ENCODE measurements at regions of chr3 and their contacts with region 1.

Region 1: DNA sequence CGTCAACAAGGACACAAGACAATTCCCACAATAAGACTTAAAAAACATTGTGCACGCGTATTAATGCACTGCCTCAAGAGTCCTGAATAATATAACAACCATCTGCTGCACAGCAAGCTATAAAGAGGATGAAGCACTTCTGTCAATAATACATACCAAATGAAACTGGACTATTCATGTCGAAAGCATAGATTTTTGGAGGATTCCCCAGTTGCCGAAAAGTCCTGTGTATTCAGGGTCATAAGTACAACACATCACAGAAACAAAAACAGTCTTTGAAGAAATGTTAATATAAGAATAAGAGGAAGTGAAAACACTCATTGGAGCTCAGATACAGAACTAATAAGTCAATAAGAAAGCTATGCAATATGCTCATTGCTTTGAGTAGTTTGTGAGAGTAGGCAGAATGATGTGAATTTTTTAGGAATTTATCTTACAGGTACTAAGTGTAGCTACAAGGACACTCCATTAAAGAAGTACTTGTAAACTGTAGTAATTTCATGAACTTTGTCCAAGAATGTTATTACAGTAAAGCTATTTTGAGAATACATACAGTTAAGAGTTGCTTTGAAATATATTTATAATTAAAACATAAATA is 31.6 kb downstream of the CBLB start:
- DNase-seq: no peak
- ATAC-seq: peak in 1 of 2 donors; percentile 28
- H3K4me3 Mint-ChIP-seq: peak overlapping the region in 7 of 10 donors; percentile 11 to 75 (median 30)
- H3K27ac Mint-ChIP-seq: peak overlapping the region in 7 of 10 donors; percentile 0 to 75 (median 65)
- H3K4me1 Mint-ChIP-seq: peaks cover 25 to 77% (median 68%) of the 10 kb centered on the region in 4 donors
- H3K27me3 Mint-ChIP-seq: no peaks in the 10 kb centered on the region

Region 2: GRCh38 chr3:105613120-105613519 is 224.1 kb before region 1 on chr3:
- POLR2A ChIA-PET with region 1: no interaction called
- DNase-seq: no peak
- ATAC-seq: no peak
- H3K4me3 Mint-ChIP-seq: peak overlapping the region in 1 of 10 donors; percentile 9
- H3K27ac Mint-ChIP-seq: no peak overlapping the region
- H3K4me1 Mint-ChIP-seq: peaks cover 0 to 2% (median 0%) of the 10 kb centered on the region in 4 donors
- H3K27me3 Mint-ChIP-seq: peaks cover 0 to 7% (median 0%) of the 10 kb centered on the region in 5 donors

Region 3: DNA sequence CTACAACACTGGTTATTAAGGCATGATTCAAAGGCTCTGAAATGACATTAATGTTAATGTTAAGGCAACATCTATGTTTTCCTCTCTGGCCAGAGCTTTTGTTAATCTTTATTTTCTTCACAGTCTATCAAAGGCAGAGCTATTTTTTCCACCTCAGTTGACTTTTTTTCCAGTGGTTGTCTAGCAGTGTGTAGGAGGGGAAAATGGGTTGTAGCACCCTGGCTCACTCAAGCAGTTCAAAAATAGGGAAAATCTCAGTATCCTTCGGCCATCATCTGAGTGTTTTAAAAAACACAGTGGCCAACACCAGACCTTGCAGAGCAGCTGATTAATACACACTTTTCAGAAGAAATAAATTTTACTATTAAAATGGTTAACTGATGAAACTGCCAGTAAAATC is 10.2 kb after region 1 on chr3:
- POLR2A ChIA-PET with region 1: interaction called, 12 read pairs
- DNase-seq: no peak
- ATAC-seq: peak in 1 of 2 donors; percentile 37
- H3K4me3 Mint-ChIP-seq: peak overlapping the region in 9 of 10 donors; percentile 0 to 51 (median 30)
- H3K27ac Mint-ChIP-seq: peak overlapping the region in 9 of 10 donors; percentile 0 to 84 (median 49)
- H3K4me1 Mint-ChIP-seq: peaks cover 17 to 71% (median 56%) of the 10 kb centered on the region in 4 donors
- H3K27me3 Mint-ChIP-seq: no peaks in the 10 kb centered on the region

Region 4: DNA sequence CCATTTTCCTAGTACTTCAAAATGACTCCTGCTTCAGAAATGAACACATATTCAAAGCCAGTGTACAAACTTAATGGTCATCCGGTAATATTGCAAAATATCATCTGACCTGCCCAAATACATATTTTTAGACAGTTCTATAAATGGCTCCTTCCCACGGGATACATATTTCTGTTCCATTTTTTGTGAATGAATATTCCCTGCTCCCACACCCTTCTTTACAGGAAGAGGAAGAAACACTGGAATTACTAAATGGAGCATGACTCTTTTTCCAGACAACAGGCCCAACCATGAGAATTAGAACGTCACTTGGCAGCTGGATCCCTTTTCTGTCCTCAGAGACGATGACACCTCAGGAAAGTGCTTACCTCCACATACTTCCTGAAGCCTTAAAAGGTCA is 69.6 kb after region 1 on chr3:
- POLR2A ChIA-PET with region 1: no interaction called
- DNase-seq: no peak
- ATAC-seq: no peak
- H3K4me3 Mint-ChIP-seq: no peak overlapping the region
- H3K27ac Mint-ChIP-seq: peak overlapping the region in 1 of 10 donors; percentile 5
- H3K4me1 Mint-ChIP-seq: peaks cover 5 to 12% (median 10%) of the 10 kb centered on the region in 4 donors
- H3K27me3 Mint-ChIP-seq: no peaks in the 10 kb centered on the region

Region 5: GRCh38 chr3:106473576-106474475 is 636.6 kb after region 1 on chr3:
- POLR2A ChIA-PET with region 1: no interaction called
- DNase-seq: no peak
- ATAC-seq: no peak
- H3K4me3 Mint-ChIP-seq: no peak overlapping the region
- H3K27ac Mint-ChIP-seq: no peak overlapping the region
- H3K4me1 Mint-ChIP-seq: no peaks in the 10 kb centered on the region
- H3K27me3 Mint-ChIP-seq: no peaks in the 10 kb centered on the region

Measured in naive thymus-derived CD8-positive, alpha-beta T cell (primary cell).